ENCODE measurements at regions of chr11 and their contacts with region 1.

Region 1: DNA sequence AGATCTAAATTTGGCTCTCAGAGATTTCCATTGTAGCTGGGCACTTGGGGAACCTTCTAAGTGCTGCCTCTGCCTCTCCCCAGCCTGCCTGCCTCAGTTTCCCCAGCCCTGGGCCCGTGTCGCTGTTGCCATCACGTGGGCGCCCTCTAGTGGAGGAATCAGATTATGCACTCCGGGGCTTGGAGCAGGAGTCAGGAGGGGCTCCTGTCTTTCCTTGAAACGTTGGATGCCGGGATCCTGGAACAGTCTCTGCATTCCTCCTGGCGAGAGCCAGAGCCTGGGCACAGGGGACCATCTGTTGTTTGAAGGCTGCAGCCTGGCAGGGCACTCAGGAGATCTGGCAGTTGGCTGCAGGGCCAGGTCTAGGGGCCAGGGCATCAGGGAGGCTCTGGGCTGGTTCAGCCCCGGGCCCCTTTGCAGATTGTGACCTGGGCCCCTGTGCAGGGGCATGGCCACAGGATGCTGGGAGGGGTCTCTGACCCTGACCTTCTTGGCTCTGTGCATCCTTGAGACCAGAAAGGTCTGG is 71.6 kb downstream of the LRP5 start:
- DNase-seq: peak; percentile 28 to 88
- H3K4me3 ChIP-seq: no peak overlapping the region
- H3K27ac ChIP-seq: peak overlapping the region; percentile 69 to 78
- H3K4me1 ChIP-seq: peaks cover 24 to 47% of the 10 kb centered on the region in 2 donors
- H3K27me3 ChIP-seq: no peaks in the 10 kb centered on the region
- CTCF ChIP-seq: peak; percentile 89 to 96 (median 94)

Region 2: GRCh38 chr11:68257475-68258362 is 126.3 kb before region 1 on chr11:
- intact Hi-C with region 1: loop called (anchors 1 kb)
- DNase-seq: peak; percentile 75 to 98
- H3K4me3 ChIP-seq: peak overlapping the region in 1 of 2 donors; percentile 51
- H3K27ac ChIP-seq: peak overlapping the region; percentile 10 to 37
- H3K4me1 ChIP-seq: peaks cover 0 to 3% of the 10 kb centered on the region in 2 donors
- H3K27me3 ChIP-seq: no peaks in the 10 kb centered on the region
- CTCF ChIP-seq: peak; percentile 75 to 94 (median 90)

Region 3: DNA sequence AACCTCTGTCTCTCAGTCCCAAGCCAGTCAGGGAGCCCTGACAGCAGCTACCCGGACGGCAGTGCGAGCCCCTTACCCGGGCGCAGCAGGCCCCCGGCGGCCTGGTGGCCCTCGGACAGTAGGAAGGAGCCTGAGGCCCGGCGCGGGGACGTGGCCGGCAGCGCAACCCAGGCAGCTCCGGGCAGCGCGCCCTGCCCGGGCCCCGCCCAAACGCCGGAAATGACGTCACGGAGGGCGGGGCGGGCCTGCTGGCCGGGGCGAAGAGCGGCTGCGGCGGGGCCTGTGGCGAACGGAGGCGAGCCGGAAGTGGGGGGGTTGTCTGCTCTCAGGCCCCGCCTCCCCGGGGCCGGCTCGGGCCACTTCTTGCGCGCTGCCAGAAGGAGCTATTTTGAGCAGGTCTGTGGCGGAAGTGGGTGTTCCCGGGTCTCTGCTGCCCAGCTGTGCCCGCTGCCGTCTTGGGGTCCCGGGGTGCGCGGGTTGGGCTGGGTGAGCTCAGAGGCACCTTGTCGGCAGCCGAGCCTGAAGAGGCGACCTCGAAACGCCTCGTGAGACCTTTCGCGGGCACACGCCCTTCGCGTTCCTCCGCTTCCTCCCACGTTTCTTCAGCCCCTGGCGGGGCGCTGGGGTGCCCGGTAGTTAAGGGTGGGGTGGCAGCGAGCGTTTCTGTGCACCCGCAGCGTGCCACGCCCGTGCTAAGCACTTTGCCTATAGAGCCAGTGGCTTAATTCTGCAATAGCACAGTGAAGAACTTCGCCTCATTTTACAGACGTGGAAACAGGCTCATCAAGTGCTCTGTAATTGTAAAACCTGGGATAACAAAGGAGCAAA is 112.0 kb before region 1 on chr11 and contains the start of gene C11orf24:
- intact Hi-C with region 1: loop called (anchors 2 kb)
- DNase-seq: peak; percentile 80 to 96
- H3K4me3 ChIP-seq: peak within 1 kb of the TSS; percentile 78 to 82
- H3K27ac ChIP-seq: peak within 1 kb of the TSS; percentile 91 to 94
- H3K4me1 ChIP-seq: peaks cover 8 to 19% of the 10 kb centered on the region in 2 donors
- H3K27me3 ChIP-seq: no peaks in the 10 kb centered on the region
- CTCF ChIP-seq: no peak
- total RNA-seq, gene C11orf24: 123 TPM

Region 4: DNA sequence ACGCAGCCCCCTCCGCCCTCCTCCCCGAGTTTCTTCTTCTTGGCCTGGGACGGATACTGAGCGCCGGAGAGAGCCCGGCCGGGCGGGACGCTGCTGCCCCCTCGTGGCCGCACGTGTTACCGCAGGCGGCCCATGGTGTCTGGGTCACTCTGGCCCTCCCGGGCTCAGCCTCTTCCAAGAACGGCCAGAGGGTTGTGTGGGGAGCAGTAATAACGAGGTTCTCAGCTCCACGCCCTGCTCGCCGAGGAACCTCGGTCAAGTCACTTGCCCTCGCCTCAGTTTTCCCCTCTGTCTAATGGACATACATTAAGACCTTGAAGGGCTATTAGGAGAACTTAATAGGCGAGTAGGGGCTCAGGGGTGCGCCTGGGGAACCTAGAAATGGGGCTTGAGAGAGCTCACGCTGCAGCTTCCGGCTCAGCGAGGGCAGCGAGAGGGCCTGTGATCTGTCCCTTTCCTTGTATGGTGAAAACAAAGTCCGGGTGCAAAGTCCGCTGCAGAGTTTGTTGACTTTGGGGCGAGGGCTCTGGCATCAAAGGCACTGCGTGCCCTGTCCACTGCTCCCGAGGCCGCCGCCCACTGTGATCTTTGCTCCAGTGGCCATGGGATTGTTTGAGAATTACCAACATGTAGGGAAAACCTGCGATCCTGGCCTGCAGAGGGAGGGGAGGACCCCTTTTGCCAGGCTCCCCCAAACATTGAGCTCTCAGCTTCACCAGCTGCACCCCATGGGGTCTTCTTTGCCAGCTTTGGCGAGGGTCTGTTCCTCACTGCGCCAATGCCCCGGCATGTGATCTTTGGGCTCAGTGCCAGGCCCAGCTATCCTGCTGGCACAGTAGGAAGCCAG is 86.0 kb before region 1 on chr11:
- intact Hi-C with region 1: loop called (anchors 1 kb)
- DNase-seq: peak in 1 of 2 donors; percentile 86
- H3K4me3 ChIP-seq: peak overlapping the region in 1 of 2 donors; percentile 12
- H3K27ac ChIP-seq: no peak overlapping the region
- H3K4me1 ChIP-seq: peaks cover 0 to 7% of the 10 kb centered on the region in 2 donors
- H3K27me3 ChIP-seq: no peaks in the 10 kb centered on the region
- CTCF ChIP-seq: peak; percentile 96 to 100 (median 99)

Region 5: DNA sequence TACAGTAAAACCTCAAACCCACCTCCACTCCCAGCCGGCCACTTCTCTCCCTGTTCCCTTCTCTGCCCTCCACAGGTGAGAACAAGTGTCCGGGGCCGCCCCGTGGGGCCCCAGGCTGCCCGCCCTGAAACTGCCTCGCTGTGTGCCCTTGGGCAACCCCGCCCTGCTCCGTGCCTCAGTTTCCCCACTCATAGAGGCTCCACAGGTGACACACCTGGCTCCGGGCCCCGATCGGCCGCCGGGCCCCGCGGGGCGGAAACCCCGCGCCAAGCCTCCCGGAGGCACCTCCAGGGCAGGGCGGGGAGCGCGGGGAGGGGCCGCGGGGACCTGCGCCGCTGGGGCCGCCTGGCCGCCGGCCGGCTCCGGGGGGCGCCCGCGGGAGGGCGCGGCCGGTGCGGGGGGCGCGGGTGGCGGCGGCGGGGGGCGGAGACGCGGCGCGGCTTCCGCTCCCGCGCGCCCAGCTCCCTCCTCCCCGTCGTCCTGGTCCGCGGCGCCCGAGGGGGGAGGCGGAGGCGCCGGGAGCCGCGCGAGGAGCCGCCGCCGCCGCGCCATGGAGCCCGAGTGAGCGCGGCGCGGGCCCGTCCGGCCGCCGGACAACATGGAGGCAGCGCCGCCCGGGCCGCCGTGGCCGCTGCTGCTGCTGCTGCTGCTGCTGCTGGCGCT is 71.8 kb before region 1 on chr11 and contains the start of gene LRP5:
- intact Hi-C with region 1: loop called (anchors 1 kb)
- DNase-seq: no peak
- H3K4me3 ChIP-seq: peak within 1 kb of the TSS; percentile 86 to 97
- H3K27ac ChIP-seq: peak within 1 kb of the TSS; percentile 82 to 84
- H3K4me1 ChIP-seq: peaks cover 21 to 30% of the 10 kb centered on the region in 2 donors
- H3K27me3 ChIP-seq: no peaks in the 10 kb centered on the region
- CTCF ChIP-seq: no peak
- total RNA-seq, gene LRP5: 130 TPM

Region 6: DNA sequence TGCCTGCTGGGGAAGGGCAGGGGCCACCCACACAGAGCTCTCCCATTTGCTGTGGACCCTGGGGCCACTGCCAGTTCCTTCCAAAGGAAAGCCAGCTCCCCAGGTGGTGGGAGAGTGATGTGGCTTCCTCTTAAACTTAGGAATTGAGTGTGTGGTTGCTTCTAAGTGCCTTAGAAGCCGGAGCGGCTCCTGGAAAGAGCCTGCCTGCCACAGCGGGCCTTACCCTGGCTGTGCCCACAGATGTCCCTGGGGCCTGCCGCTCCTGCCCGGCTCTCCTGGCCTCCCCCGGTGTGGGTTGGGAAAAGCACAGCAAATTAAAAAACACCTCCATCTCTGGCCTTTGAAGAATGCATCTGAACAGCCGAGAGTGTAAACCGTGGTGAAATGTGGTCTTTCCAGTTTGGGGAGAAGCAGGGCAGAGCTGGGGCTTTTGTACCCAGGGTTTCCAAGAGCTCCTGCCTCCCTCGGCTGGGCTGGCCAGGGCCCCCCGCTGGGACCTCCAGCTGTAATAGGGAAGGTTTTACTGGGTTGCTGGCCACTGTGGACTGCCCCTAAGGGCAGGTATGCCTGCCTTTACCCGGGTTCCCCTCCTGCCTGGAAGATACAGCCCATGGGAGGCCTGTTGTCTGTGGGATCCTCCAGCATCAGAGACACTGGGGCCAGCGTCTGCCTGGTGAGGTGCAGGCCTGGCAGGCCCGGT is 41.4 kb before region 1 on chr11:
- intact Hi-C with region 1: loop called (anchors 5 kb)
- DNase-seq: no peak
- H3K4me3 ChIP-seq: peak overlapping the region; percentile 1 to 29
- H3K27ac ChIP-seq: peak overlapping the region; percentile 79 to 83
- H3K4me1 ChIP-seq: peaks cover 20 to 70% of the 10 kb centered on the region in 2 donors
- H3K27me3 ChIP-seq: no peaks in the 10 kb centered on the region
- CTCF ChIP-seq: no peak

Region 7: DNA sequence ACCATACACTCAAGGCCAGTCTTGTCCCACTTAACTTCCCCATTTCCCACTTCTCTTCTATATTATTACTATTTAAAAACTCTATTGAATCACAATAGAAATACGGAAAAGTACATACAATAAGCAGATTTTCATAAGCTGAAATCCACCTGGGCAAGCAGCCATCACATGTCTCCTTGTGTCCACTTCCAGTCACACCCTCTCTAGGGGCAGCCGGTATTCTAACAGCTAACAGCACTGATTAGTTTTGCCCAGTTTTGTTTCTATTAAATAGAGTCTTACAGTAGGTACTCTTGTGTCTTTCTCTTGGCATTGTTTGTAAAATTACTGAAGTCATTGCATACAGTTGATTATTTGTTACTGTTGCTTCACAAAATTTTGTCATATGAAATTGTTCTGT is 114.3 kb after region 1 on chr11:
- intact Hi-C with region 1: no loop called
- DNase-seq: no peak
- H3K4me3 ChIP-seq: no peak overlapping the region
- H3K27ac ChIP-seq: no peak overlapping the region
- H3K4me1 ChIP-seq: peaks cover 8 to 34% of the 10 kb centered on the region in 2 donors
- H3K27me3 ChIP-seq: no peaks in the 10 kb centered on the region
- CTCF ChIP-seq: no peak

Measured in ascending aorta (tissue), 2 donors.